ENCODE measurements at regions of chr4 and their contacts with region 1.

Region 1: DNA sequence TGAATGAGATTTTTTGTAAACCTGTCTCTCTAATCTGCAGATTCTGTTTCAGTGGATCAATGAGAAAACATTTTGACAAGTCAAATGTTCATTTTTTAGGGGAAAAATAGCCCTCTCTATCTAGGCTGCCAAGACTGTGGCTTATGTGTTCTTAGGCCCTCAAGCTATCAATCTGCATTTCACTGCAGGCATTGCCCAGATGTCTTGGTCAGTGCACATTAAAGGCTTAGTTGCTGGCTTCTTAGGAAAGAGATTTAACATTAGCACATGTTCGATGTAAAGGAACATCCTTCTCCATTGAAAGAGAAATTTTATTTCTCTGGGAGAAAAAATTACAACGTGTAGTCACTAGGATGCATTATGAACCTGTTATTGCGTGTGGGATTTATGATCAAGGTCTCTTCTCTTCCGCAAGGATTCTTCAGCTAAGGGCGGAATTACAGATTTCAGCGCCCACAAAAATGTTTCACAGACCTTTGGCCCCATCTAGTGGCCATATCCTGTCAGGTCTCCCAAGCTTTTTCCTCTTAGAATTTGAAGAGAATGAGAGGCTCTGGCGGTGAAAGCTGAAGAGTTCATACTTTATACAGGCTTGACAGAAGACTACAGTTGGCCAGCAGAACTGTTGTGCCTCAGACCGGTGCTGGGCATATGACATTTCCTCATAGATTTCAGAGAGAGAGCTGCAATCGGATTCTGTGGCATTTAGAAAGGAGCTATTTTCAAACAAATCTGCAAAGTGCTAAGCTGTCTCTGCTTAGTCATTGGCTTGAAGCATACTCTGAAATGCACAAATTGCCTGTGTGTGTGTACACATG is 144.6 kb upstream of the NOCT start:
- DNase-seq: peak; percentile 61
- H3K4me3 Mint-ChIP-seq: no peak overlapping the region
- H3K27ac Mint-ChIP-seq: no peak overlapping the region
- H3K4me1 Mint-ChIP-seq: no peaks in the 10 kb centered on the region
- H3K27me3 Mint-ChIP-seq: peaks cover 16% of the 10 kb centered on the region

Region 2: DNA sequence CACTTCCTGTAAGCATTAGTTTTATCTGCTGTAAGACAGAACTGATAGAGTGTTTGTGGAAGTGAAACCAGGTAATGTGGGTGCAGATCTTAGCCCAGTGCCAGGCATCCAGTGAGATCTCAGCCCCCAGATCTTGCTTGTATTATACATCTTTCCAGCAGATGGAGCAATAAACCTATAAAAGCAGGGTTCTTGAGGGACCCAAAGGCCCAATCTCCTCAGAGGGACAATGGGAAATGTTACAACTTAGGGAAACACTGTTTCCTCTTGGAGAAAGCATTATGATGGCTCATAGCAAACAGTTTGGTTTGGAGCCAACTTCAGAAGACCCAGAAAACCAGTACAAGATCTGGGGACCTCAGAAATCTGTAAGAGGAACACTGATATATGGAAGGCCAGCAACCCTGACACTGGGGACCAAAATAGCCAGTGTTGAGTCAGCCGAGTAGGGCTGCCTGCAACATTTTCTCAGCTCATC is 835.1 kb before region 1 on chr4:
- CTCF ChIA-PET with region 1: no interaction called
- POLR2A ChIA-PET with region 1: no interaction called
- intact Hi-C with region 1: loop called (anchors 5 kb)
- DNase-seq: no peak
- H3K4me3 Mint-ChIP-seq: no peak overlapping the region
- H3K27ac Mint-ChIP-seq: no peak overlapping the region
- H3K4me1 Mint-ChIP-seq: no peaks in the 10 kb centered on the region
- H3K27me3 Mint-ChIP-seq: no peaks in the 10 kb centered on the region

Region 3: DNA sequence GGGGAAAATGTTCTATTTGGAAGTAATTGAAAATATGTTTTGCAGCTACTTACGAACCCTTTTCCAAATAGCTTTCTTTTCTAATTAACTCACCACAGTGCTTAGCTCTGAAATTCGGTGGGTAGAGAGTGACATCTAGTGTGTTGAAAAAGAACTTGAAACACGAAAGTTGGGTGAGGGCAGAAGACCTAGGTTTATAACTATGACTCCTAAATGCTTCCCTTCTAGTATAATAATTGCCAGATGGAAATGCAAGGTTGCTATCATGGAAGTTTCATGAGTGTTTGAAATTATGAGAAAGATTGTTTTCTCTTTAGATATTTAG is 67.4 kb after region 1 on chr4:
- CTCF ChIA-PET with region 1: interaction called, 11 read pairs
- POLR2A ChIA-PET with region 1: no interaction called
- intact Hi-C with region 1: no loop called
- DNase-seq: no peak
- H3K4me3 Mint-ChIP-seq: no peak overlapping the region
- H3K27ac Mint-ChIP-seq: no peak overlapping the region
- H3K4me1 Mint-ChIP-seq: no peaks in the 10 kb centered on the region
- H3K27me3 Mint-ChIP-seq: peaks cover 2% of the 10 kb centered on the region

Measured in activated CD4-positive, alpha-beta memory T cell treated with anti-CD3 and anti-CD28 coated beads for 36 hours (primary cell).